Activated CD4-positive, alpha-beta T cell treated with anti-CD3 and anti-CD28 coated beads for 36 hours (primary cell): ENCODE measurements at regions of chr9 and their contacts with region 1.

Region 1: GRCh38 chr9:133375724-133376654 is at the starts of genes STKLD1 and SURF4:
- DNase-seq: peak; percentile 97
- ATAC-seq: peak; percentile 70
- H3K4me3 Mint-ChIP-seq: peak within 1 kb of the TSS; percentile 100
- H3K27ac Mint-ChIP-seq: peak within 1 kb of the TSS; percentile 99
- H3K4me1 Mint-ChIP-seq: peaks cover 35% of the 10 kb centered on the region
- H3K27me3 Mint-ChIP-seq: no peaks in the 10 kb centered on the region
- total RNA-seq, gene STKLD1: 0.40 to 0.82 TPM
- total RNA-seq, gene SURF4: 283 to 349 TPM

Region 2: GRCh38 chr9:132877824-132878694 is 497.9 kb before region 1 on chr9 and contains the start of gene AK8:
- CTCF ChIA-PET with region 1: no interaction called
- POLR2A ChIA-PET with region 1: no interaction called
- intact Hi-C with region 1: loop called in 1 of 2 experiments (anchors 10 kb)
- DNase-seq: peak; percentile 86
- ATAC-seq: peak; percentile 76
- H3K4me3 Mint-ChIP-seq: peak within 1 kb of the TSS; percentile 73
- H3K27ac Mint-ChIP-seq: peak within 1 kb of the TSS; percentile 13
- H3K4me1 Mint-ChIP-seq: peaks cover 21% of the 10 kb centered on the region
- H3K27me3 Mint-ChIP-seq: no peaks in the 10 kb centered on the region
- total RNA-seq, gene AK8: 0.21 TPM in 1 of 2 experiments, not detected in the other

Region 3: GRCh38 chr9:133133681-133134418 is 242.1 kb before region 1 on chr9:
- CTCF ChIA-PET with region 1: interaction called, 3 read pairs
- POLR2A ChIA-PET with region 1: no interaction called
- intact Hi-C with region 1: loop called in 1 of 2 experiments (anchors 5 kb)
- DNase-seq: peak; percentile 95
- ATAC-seq: peak; percentile 84
- H3K4me3 Mint-ChIP-seq: peak overlapping the region; percentile 41
- H3K27ac Mint-ChIP-seq: peak overlapping the region; percentile 98
- H3K4me1 Mint-ChIP-seq: peaks cover 75% of the 10 kb centered on the region
- H3K27me3 Mint-ChIP-seq: no peaks in the 10 kb centered on the region

Region 4: GRCh38 chr9:133335878-133336811 is 39.8 kb before region 1 on chr9 and contains the start of gene SURF6:
- CTCF ChIA-PET with region 1: interaction called, 10 read pairs
- POLR2A ChIA-PET with region 1: no interaction called
- intact Hi-C with region 1: loop called (anchors 1 to 2 kb)
- DNase-seq: peak; percentile 97
- ATAC-seq: peak; percentile 96
- H3K4me3 Mint-ChIP-seq: peak within 1 kb of the TSS; percentile 86
- H3K27ac Mint-ChIP-seq: peak within 1 kb of the TSS; percentile 89
- H3K4me1 Mint-ChIP-seq: peaks cover 23% of the 10 kb centered on the region
- H3K27me3 Mint-ChIP-seq: no peaks in the 10 kb centered on the region
- total RNA-seq, gene SURF6: 22.4 to 24.3 TPM

Region 5: GRCh38 chr9:133406480-133407307 is 30.7 kb after region 1 on chr9:
- CTCF ChIA-PET with region 1: interaction called, 7 read pairs
- POLR2A ChIA-PET with region 1: no interaction called
- intact Hi-C with region 1: loop called (anchors 1 to 2 kb)
- DNase-seq: peak; percentile 93
- ATAC-seq: peak; percentile 94
- H3K4me3 Mint-ChIP-seq: no peak overlapping the region
- H3K27ac Mint-ChIP-seq: peak overlapping the region; percentile 48
- H3K4me1 Mint-ChIP-seq: peaks cover 6% of the 10 kb centered on the region
- H3K27me3 Mint-ChIP-seq: no peaks in the 10 kb centered on the region

Region 6: GRCh38 chr9:133634081-133634691 is 258.2 kb after region 1 on chr9:
- CTCF ChIA-PET with region 1: no interaction called
- POLR2A ChIA-PET with region 1: no interaction called
- intact Hi-C with region 1: no loop called
- DNase-seq: no peak
- ATAC-seq: no peak
- H3K4me3 Mint-ChIP-seq: no peak overlapping the region
- H3K27ac Mint-ChIP-seq: no peak overlapping the region
- H3K4me1 Mint-ChIP-seq: no peaks in the 10 kb centered on the region
- H3K27me3 Mint-ChIP-seq: no peaks in the 10 kb centered on the region

Region 7: GRCh38 chr9:133992780-133993634 is 617.0 kb after region 1 on chr9:
- CTCF ChIA-PET with region 1: no interaction called
- POLR2A ChIA-PET with region 1: no interaction called
- intact Hi-C with region 1: loop called in 1 of 2 experiments (anchors 10 kb)
- DNase-seq: peak; percentile 88
- ATAC-seq: peak; percentile 75
- H3K4me3 Mint-ChIP-seq: peak overlapping the region; percentile 61
- H3K27ac Mint-ChIP-seq: no peak overlapping the region
- H3K4me1 Mint-ChIP-seq: peaks cover 2% of the 10 kb centered on the region
- H3K27me3 Mint-ChIP-seq: peaks cover 3% of the 10 kb centered on the region

Region 8: GRCh38 chr9:134163353-134164196 is 787.6 kb after region 1 on chr9:
- CTCF ChIA-PET with region 1: no interaction called
- POLR2A ChIA-PET with region 1: no interaction called
- intact Hi-C with region 1: loop called in 1 of 2 experiments (anchors 1 kb)
- DNase-seq: peak; percentile 83
- ATAC-seq: peak; percentile 39
- H3K4me3 Mint-ChIP-seq: no peak overlapping the region
- H3K27ac Mint-ChIP-seq: no peak overlapping the region
- H3K4me1 Mint-ChIP-seq: peaks cover 2% of the 10 kb centered on the region
- H3K27me3 Mint-ChIP-seq: no peaks in the 10 kb centered on the region